Activated CD4-positive, alpha-beta T cell treated with anti-CD3 and anti-CD28 coated beads, Interleukin-2, amount 10 ng/mL, durations not matched to agents 24 days and 14 days (primary cell): ENCODE measurements at regions of chr3 and their contacts with region 1.

Region 1: DNA sequence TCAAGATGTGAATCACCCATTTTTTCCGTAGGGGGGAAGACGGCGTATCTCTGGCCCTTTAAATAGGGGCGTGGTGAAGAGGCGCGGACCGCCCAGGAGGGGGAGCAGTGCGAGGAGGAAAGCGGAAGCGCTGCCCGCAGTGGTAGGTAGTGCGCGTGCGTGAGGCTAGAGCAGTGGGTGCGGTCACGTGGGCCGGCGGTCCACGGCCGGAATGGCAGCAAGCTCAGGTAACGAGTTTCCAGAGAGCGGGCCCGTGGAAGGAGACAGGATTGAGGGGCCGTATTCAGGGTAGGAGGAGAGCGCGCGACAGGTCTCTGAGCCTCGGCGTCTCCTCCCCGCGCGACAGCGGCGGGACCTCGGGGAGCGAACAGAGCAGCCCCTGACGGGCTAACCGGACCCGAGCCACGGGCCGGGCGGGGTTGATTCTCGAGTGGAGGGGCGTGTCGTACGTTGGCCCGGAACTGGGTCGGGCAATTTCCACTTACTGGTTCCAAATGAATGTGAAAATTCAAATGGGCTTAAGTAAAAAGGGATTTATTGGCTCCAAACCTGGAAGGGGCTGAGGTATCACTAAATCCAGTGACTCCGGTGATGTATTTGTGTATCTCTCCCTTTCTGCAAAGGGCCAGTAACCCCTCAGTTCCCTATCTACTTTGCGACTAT is at the start of gene VPS8:
- DNase-seq: peak; percentile 99
- H3K4me3 Mint-ChIP-seq: peak within 1 kb of the TSS; percentile 97
- H3K27ac Mint-ChIP-seq: peak within 1 kb of the TSS; percentile 97
- H3K4me1 Mint-ChIP-seq: peaks cover 57% of the 10 kb centered on the region
- H3K27me3 Mint-ChIP-seq: peaks cover 3% of the 10 kb centered on the region
- total RNA-seq, gene VPS8: 33.6 and 33.9 TPM in 2 replicates

Region 2: GRCh38 chr3:184636741-184637316 is 175.3 kb before region 1 on chr3:
- intact Hi-C with region 1: loop called (anchors 1 kb)
- DNase-seq: peak; percentile 79
- H3K4me3 Mint-ChIP-seq: no peak overlapping the region
- H3K27ac Mint-ChIP-seq: no peak overlapping the region
- H3K4me1 Mint-ChIP-seq: peaks cover 5% of the 10 kb centered on the region
- H3K27me3 Mint-ChIP-seq: peaks cover 2% of the 10 kb centered on the region

Region 3: GRCh38 chr3:184874709-184875644 is 62.8 kb after region 1 on chr3:
- intact Hi-C with region 1: loop called (anchors 5 kb)
- DNase-seq: peak; percentile 69
- H3K4me3 Mint-ChIP-seq: no peak overlapping the region
- H3K27ac Mint-ChIP-seq: no peak overlapping the region
- H3K4me1 Mint-ChIP-seq: peaks cover 14% of the 10 kb centered on the region
- H3K27me3 Mint-ChIP-seq: no peaks in the 10 kb centered on the region

Region 4: GRCh38 chr3:185498503-185499396 is 686.6 kb after region 1 on chr3 and contains the start of gene TMEM41A:
- intact Hi-C with region 1: loop called (anchors 5 kb)
- DNase-seq: peak; percentile 97
- H3K4me3 Mint-ChIP-seq: peak within 1 kb of the TSS; percentile 98
- H3K27ac Mint-ChIP-seq: peak within 1 kb of the TSS; percentile 91
- H3K4me1 Mint-ChIP-seq: peaks cover 20% of the 10 kb centered on the region
- H3K27me3 Mint-ChIP-seq: peaks cover 9% of the 10 kb centered on the region
- total RNA-seq, gene TMEM41A: 25.4 and 25.8 TPM in 2 replicates